Left cardiac atrium (tissue), 4 donors: ENCODE measurements at regions of chr22 and their contacts with region 1.

Region 1: GRCh38 chr22:19432133-19432851 is at the start of gene MRPL40:
- DNase-seq: peak; percentile 97
- ATAC-seq: peak; percentile 97 to 98
- total RNA-seq, gene MRPL40: 30.2 to 32.2 TPM

Region 2: GRCh38 chr22:18947905-18948304 is 484.4 kb before region 1 on chr22:
- intact Hi-C with region 1: no loop called
- DNase-seq: no peak
- ATAC-seq: no peak

Region 3: DNA sequence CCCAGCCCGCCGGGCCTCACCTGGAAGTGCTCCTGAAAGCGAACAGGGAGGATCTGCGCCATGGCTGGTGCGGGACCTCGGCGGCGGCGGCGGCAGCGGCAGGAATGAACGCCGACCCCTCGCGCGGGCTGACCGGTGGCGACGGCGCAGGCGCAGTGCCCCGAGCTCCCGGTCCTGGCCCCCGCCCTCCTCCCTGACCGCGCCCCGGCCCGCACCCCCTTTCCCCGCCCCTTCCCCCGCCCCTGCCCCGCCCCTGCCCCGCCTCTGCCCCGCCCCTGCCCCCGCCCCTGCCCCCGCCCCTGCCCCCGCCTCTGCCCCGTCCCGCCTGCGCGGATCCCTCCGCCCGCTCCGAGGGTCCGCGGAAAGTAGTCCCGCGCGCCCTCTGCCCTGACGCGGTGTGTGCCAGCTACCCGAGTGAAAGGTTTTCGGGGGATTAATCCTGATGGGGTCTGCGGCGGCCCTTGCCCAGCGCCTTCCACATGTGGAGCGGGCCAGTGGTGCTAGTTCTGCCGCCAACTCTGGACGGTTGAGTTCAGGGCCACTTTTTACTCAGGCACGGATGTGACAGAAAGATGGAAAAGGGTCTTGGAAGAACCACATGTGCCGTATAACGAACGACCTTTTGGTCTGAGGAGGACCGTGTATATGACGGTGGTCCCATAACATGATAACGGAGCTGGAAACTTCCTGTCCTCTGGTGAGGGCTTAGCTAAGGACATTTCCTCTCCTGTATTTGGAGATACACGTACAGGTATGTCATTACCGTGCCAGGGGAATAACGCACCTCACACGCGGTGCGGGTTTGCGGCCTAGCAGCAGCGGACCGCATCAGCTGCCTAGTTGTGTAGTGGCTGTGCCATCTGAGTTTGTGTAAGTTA is 140.5 kb before region 1 on chr22 and contains the start of gene CLTCL1:
- intact Hi-C with region 1: loop called in 1 of 2 experiments (anchors 10 kb)
- DNase-seq: peak; percentile 86
- ATAC-seq: peak; percentile 92 to 93
- total RNA-seq, gene CLTCL1: 16.0 to 20.5 TPM